K562 (cell line): ENCODE measurements at regions of chr19 and their contacts with region 1.

Region 1: DNA sequence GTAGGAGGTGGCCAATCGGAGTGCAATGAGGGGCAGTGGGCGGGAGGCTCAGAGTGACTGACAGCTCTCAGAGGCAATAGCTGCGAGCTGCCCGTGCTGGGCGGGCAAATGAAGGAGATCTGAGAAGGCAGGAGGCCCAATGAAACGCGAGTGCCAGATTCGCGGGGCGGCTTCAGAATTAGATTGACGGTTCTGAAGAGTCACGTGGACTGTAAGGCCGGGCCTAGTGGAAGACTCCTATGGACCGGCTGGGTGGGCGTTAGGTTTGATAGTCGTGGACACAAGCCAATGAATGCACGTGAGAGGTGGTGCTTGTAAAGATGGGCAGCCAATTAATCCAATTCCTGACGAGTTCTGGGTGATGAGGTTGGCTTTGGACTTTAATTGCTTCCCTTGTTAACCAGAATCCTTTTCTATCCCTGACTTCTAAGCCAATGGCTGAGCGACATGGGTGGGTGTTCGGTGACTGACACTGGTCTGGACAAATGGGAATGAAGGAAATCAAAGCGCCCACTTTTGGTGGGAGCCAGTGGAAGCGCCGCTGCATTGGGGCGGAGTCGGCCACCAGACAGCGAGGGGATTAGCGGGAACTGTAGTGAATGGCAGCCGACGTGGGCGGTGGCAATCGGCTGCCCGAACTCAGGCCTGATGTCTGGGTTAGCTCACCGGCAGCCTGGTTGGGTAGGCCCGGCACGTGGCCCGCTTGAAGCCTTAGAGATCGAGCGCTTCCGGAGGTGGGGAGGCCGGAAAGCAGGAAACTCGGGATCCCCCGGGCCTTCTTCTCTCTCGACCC is 524 bp upstream of the KHSRP start:
- DNase-seq: peak; percentile 90 to 100 (median 94)
- ATAC-seq: peak; percentile 94
- H3K4me3 ChIP-seq: peak overlapping the region; percentile 82; the same call in 1 of the 2 replicates
- H3K27ac ChIP-seq: peak overlapping the region; percentile 78
- H3K4me1 ChIP-seq: peaks cover 17 to 46% of the 10 kb centered on the region in 2 experiments
- H3K27me3 ChIP-seq: no peaks in the 10 kb centered on the region
- CTCF ChIP-seq: peak in 1 of 3 experiments; percentile 6; a peak in 1 of 6 replicates
- EP300 ChIP-seq: no peak
- POLR2A ChIP-seq: peak; percentile 43; the same call in 1 of the 2 replicates
- RAD21 ChIP-seq: no peak

Region 2: DNA sequence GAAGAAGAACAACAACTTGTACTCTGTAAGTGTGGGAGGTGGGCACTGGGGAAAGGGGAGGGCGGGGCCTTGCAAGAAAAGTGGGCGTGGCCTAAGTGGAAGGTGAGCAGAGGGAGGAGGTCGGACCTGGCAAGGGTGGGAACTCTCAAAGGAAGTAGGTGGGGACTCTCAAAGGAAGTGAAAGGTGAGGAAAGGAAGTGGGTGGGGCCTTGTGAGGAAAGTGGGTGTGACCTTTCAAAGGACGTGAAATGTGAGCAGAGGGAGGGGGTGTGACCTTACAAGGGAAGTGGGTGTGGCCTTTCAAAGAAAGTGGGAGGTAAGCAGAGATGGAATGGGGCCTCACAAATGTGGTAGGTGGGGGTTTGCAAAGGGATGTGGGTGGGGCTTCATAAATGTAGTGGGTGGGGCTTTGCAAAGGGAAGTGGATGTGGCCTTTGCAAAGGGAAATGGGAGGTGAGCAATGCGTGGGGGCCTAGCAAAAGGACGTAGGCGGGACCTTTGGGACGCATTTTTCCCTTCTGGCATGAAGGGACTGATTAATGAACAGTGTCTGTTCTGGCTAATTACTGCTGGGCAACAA is 263.8 kb before region 1 on chr19:
- CTCF ChIA-PET with region 1: no interaction called
- POLR2A ChIA-PET with region 1: no interaction called
- in situ Hi-C with region 1: no loop called
- intact Hi-C with region 1: loop called (anchors 10 kb)
- DNase-seq: peak; percentile 89 to 95 (median 91)
- ATAC-seq: peak; percentile 95
- H3K4me3 ChIP-seq: no peak overlapping the region
- H3K27ac ChIP-seq: peak overlapping the region; percentile 38; the same call in 2 of the 3 replicates
- H3K4me1 ChIP-seq: peaks cover 0 to 6% of the 10 kb centered on the region in 2 experiments; a peak in 2 of 5 replicates
- H3K27me3 ChIP-seq: no peaks in the 10 kb centered on the region
- CTCF ChIP-seq: no peak
- EP300 ChIP-seq: no peak
- POLR2A ChIP-seq: no peak
- RAD21 ChIP-seq: no peak

Region 3: DNA sequence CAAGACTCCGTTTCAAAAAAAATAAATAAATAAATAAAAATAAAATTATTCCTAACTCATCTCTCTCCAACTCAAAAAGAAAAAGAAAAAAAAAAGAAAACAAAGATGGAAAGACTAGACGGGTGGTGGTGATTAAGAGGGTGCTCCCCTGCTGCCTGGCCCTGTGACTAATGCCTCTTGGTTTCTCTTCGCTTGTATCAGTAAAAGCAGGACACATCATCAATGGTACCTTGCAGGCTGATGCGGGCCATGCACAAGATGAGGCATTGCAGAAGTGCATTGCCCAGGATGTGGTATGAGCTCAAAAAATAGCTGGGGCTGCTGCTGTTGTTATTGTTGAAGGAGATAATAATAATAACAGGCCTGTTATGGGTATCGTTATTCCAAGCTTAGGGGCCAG is 106.4 kb before region 1 on chr19:
- CTCF ChIA-PET with region 1: no interaction called
- POLR2A ChIA-PET with region 1: no interaction called
- in situ Hi-C with region 1: no loop called
- intact Hi-C with region 1: loop called (anchors 10 kb)
- DNase-seq: no peak
- ATAC-seq: no peak
- H3K4me3 ChIP-seq: no peak overlapping the region
- H3K27ac ChIP-seq: no peak overlapping the region
- H3K4me1 ChIP-seq: no peaks in the 10 kb centered on the region
- H3K27me3 ChIP-seq: peaks cover 20 to 49% of the 10 kb centered on the region in 2 experiments
- CTCF ChIP-seq: no peak
- EP300 ChIP-seq: no peak
- POLR2A ChIP-seq: no peak
- RAD21 ChIP-seq: no peak

Region 4: GRCh38 chr19:6372594-6373095 is 52.5 kb before region 1 on chr19 and contains the start of gene ALKBH7:
- CTCF ChIA-PET with region 1: no interaction called
- POLR2A ChIA-PET with region 1: interaction called, 11 read pairs
- in situ Hi-C with region 1: no loop called
- intact Hi-C with region 1: no loop called
- DNase-seq: peak; percentile 89 to 100 (median 92)
- ATAC-seq: peak; percentile 88
- H3K4me3 ChIP-seq: peak within 1 kb of the TSS; percentile 99
- H3K27ac ChIP-seq: peak within 1 kb of the TSS; percentile 97
- H3K4me1 ChIP-seq: peaks cover 8 to 62% of the 10 kb centered on the region in 2 experiments
- H3K27me3 ChIP-seq: no peaks in the 10 kb centered on the region
- CTCF ChIP-seq: no peak
- EP300 ChIP-seq: no peak
- POLR2A ChIP-seq: peak; percentile 84
- RAD21 ChIP-seq: peak in 1 of 2 experiments; percentile 7; a peak in 1 of 4 replicates
- polyA plus RNA-seq, gene ALKBH7: 0.69 to 2.8 TPM

Region 5: GRCh38 chr19:6412447-6413091 is 12.6 kb before region 1 on chr19:
- CTCF ChIA-PET with region 1: no interaction called
- POLR2A ChIA-PET with region 1: interaction called, 16 read pairs
- in situ Hi-C with region 1: no loop called
- intact Hi-C with region 1: no loop called
- DNase-seq: peak; percentile 62 to 73 (median 66)
- ATAC-seq: peak; percentile 90
- H3K4me3 ChIP-seq: no peak overlapping the region
- H3K27ac ChIP-seq: no peak overlapping the region
- H3K4me1 ChIP-seq: peaks cover 0 to 39% of the 10 kb centered on the region in 2 experiments; a peak in 2 of 5 replicates
- H3K27me3 ChIP-seq: no peaks in the 10 kb centered on the region
- CTCF ChIP-seq: peak; percentile 71 to 85 (median 73)
- EP300 ChIP-seq: no peak
- POLR2A ChIP-seq: peak; percentile 76; the same call in 1 of the 2 replicates
- RAD21 ChIP-seq: peak in 1 of 2 experiments; percentile 51; a peak in 2 of 4 replicates

Region 6: DNA sequence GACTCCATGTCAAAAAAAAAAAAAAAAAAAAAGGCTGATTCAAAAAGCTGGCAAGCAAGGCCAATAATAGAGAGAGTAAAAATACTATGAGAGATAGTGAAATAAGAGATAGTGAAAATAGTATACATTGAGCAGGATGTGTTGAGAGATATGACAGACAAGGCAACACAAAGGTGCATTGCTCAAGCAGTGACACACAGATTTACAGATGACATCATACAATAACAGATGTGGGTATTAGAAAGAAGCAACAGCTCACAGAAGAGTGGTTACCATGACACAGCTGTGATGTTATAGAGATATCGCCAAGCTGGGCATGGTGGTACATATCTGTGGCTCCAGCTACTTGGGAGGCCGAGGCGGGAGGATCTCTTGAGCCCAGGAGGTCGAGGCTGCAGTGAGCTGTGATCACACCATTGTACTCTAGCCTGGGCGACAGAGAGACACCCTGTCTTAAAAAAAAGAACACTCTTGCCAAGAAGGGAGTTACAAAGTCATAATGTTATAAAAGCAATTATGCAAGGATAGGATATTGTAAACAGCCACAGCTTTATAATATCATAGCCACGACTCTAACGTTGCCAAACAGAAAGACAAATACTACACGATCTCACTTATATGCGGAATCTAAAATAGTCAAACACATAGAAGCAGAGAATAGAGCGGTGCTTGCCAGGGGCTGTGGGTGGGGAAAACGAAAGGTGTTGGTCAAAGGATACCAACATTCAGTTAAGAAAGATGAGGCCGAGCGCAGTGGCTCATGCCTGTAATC is 116.0 kb after region 1 on chr19:
- CTCF ChIA-PET with region 1: no interaction called
- POLR2A ChIA-PET with region 1: no interaction called
- in situ Hi-C with region 1: no loop called
- intact Hi-C with region 1: no loop called
- DNase-seq: no peak
- ATAC-seq: no peak
- H3K4me3 ChIP-seq: no peak overlapping the region
- H3K27ac ChIP-seq: no peak overlapping the region
- H3K4me1 ChIP-seq: peaks cover 0 to 2% of the 10 kb centered on the region in 2 experiments; a peak in 1 of 5 replicates
- H3K27me3 ChIP-seq: no peaks in the 10 kb centered on the region
- CTCF ChIP-seq: no peak
- EP300 ChIP-seq: no peak
- POLR2A ChIP-seq: no peak
- RAD21 ChIP-seq: no peak

Region 7: DNA sequence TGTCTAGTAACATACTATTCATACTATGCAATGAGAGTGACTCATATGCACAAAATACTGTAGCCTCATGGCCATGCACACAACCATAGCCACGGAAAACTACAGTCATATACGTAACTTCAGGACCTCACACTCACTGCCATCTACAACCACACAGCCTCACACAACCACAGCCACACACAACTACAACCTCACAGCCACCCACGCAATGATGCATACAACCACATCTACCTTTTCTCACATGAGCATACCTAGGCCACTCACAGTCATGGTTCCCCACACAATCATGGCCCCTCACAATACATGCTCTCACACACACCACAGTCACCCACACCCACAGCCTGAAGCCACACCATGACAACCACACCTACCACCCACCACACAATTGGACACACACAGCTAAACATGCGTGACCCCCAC is 253.6 kb after region 1 on chr19:
- CTCF ChIA-PET with region 1: no interaction called
- POLR2A ChIA-PET with region 1: no interaction called
- in situ Hi-C with region 1: no loop called
- intact Hi-C with region 1: no loop called
- DNase-seq: no peak
- ATAC-seq: no peak
- H3K4me3 ChIP-seq: no peak overlapping the region
- H3K27ac ChIP-seq: no peak overlapping the region
- H3K4me1 ChIP-seq: peaks cover 26 to 40% of the 10 kb centered on the region in 2 experiments
- H3K27me3 ChIP-seq: no peaks in the 10 kb centered on the region
- CTCF ChIP-seq: no peak
- EP300 ChIP-seq: no peak
- POLR2A ChIP-seq: no peak
- RAD21 ChIP-seq: no peak